HepG2 (cell line): ENCODE measurements at regions of chr2 and their contacts with region 1.

Region 1: DNA sequence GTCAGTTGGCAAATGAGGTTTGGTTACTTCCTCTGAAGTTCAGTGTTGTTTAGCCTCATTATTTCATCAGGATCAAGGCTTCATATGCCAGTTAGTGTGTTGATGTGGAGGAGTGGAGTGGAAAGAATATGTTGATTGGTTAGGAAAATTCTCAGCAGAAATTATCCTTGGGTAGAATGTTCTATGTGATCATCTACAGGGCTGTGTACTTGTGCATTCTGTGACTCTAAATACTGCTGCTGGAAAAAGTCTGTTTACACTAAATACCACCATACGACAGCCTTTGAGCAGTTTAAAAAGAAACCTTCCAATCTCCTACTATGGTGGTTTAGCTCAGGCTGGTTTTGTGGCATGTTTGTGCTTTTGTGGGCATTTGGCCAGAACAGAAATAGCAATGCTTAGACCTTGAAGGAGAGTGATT is 25.8 kb downstream of the CAB39 start:
- DNase-seq: peak; percentile 35
- ATAC-seq: peak; percentile 83
- H3K4me3 ChIP-seq: peak overlapping the region in 2 of 3 experiments; percentile 32 to 37; a peak in 4 of 6 replicates
- H3K27ac ChIP-seq: peak overlapping the region; percentile 34
- H3K4me1 ChIP-seq: peaks cover 45% of the 10 kb centered on the region
- H3K27me3 ChIP-seq: no peaks in the 10 kb centered on the region
- CTCF ChIP-seq: no peak
- EP300 ChIP-seq: no peak; a peak in 1 of 4 replicates
- POLR2A ChIP-seq: no peak
- RAD21 ChIP-seq: no peak

Region 2: GRCh38 chr2:230589497-230590015 is 148.8 kb before region 1 on chr2:
- CTCF ChIA-PET with region 1: no interaction called
- POLR2A ChIA-PET with region 1: no interaction called
- in situ Hi-C with region 1: no loop called
- intact Hi-C with region 1: no loop called
- DNase-seq: no peak
- ATAC-seq: no peak
- H3K4me3 ChIP-seq: no peak overlapping the region
- H3K27ac ChIP-seq: no peak overlapping the region
- H3K4me1 ChIP-seq: no peaks in the 10 kb centered on the region
- H3K27me3 ChIP-seq: peaks cover 2 to 17% of the 10 kb centered on the region in 2 experiments; a peak in 4 of 5 replicates
- CTCF ChIP-seq: no peak
- EP300 ChIP-seq: no peak
- POLR2A ChIP-seq: no peak
- RAD21 ChIP-seq: no peak

Region 3: GRCh38 chr2:230658877-230659652 is 79.3 kb before region 1 on chr2:
- CTCF ChIA-PET with region 1: no interaction called
- POLR2A ChIA-PET with region 1: no interaction called
- in situ Hi-C with region 1: no loop called
- intact Hi-C with region 1: no loop called
- DNase-seq: no peak
- ATAC-seq: no peak
- H3K4me3 ChIP-seq: no peak overlapping the region
- H3K27ac ChIP-seq: no peak overlapping the region
- H3K4me1 ChIP-seq: peaks cover 12% of the 10 kb centered on the region
- H3K27me3 ChIP-seq: peaks cover 1 to 27% of the 10 kb centered on the region in 2 experiments; a peak in 3 of 5 replicates
- CTCF ChIP-seq: no peak
- EP300 ChIP-seq: no peak
- POLR2A ChIP-seq: no peak
- RAD21 ChIP-seq: no peak

Region 4: DNA sequence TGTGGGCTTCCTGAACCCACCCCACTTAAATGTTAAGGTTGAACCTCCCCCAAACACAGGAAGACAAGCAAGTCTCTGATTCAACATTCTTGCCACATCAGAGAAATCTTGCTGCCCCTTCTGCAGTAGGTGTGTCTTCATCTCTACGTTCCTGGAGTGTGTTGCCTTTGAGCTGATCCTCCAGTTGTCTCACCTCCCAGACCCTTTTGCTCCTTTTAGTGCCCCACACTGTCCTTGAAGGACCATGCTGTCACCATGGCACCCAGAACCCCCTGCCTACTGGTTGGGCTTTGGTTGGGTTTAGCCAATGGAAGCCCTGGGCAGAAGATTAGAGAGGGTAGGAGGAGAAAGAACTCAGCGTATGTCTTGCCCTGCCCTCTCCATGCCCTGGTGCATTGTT is 15.0 kb before region 1 on chr2:
- CTCF ChIA-PET with region 1: no interaction called
- POLR2A ChIA-PET with region 1: no interaction called
- in situ Hi-C with region 1: no loop called
- intact Hi-C with region 1: no loop called
- DNase-seq: no peak
- ATAC-seq: no peak
- H3K4me3 ChIP-seq: no peak overlapping the region
- H3K27ac ChIP-seq: no peak overlapping the region
- H3K4me1 ChIP-seq: no peaks in the 10 kb centered on the region
- H3K27me3 ChIP-seq: no peaks in the 10 kb centered on the region
- CTCF ChIP-seq: no peak
- EP300 ChIP-seq: no peak
- POLR2A ChIP-seq: no peak
- RAD21 ChIP-seq: no peak

Region 5: GRCh38 chr2:230762317-230762896 is 24.0 kb after region 1 on chr2:
- CTCF ChIA-PET with region 1: no interaction called
- POLR2A ChIA-PET with region 1: interaction called, 3 read pairs
- in situ Hi-C with region 1: no loop called
- intact Hi-C with region 1: loop called (anchors 2 kb)
- DNase-seq: peak; percentile 65
- ATAC-seq: peak; percentile 100
- H3K4me3 ChIP-seq: no peak overlapping the region
- H3K27ac ChIP-seq: no peak overlapping the region
- H3K4me1 ChIP-seq: no peaks in the 10 kb centered on the region
- H3K27me3 ChIP-seq: no peaks in the 10 kb centered on the region
- CTCF ChIP-seq: peak; percentile 75
- EP300 ChIP-seq: no peak
- POLR2A ChIP-seq: no peak
- RAD21 ChIP-seq: no peak

Region 6: DNA sequence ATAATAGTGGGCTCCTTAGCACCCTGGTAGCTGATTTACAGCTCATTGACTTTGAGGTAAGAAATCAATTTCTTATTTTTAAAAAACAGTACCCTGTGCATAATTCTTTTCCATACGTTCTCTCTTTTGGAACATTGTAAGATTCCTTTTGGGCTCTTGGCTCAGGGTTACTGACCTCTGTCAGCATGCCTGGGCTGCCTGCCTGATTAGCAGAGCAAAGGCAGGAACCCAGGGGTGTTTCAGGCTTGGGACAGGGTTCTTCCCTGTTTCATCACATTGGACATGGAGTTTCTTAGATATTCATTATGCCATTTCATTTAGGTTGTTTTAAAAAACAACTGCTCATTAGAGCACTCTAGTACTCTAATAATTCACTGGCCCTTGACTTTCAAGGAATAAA is 52.6 kb after region 1 on chr2:
- CTCF ChIA-PET with region 1: no interaction called
- POLR2A ChIA-PET with region 1: no interaction called
- in situ Hi-C with region 1: no loop called
- intact Hi-C with region 1: no loop called
- DNase-seq: no peak
- ATAC-seq: no peak
- H3K4me3 ChIP-seq: no peak overlapping the region
- H3K27ac ChIP-seq: no peak overlapping the region
- H3K4me1 ChIP-seq: no peaks in the 10 kb centered on the region
- H3K27me3 ChIP-seq: no peaks in the 10 kb centered on the region
- CTCF ChIP-seq: no peak
- EP300 ChIP-seq: no peak
- POLR2A ChIP-seq: no peak
- RAD21 ChIP-seq: no peak